ENCODE measurements at regions of chr17 and their contacts with region 1.

Region 1: DNA sequence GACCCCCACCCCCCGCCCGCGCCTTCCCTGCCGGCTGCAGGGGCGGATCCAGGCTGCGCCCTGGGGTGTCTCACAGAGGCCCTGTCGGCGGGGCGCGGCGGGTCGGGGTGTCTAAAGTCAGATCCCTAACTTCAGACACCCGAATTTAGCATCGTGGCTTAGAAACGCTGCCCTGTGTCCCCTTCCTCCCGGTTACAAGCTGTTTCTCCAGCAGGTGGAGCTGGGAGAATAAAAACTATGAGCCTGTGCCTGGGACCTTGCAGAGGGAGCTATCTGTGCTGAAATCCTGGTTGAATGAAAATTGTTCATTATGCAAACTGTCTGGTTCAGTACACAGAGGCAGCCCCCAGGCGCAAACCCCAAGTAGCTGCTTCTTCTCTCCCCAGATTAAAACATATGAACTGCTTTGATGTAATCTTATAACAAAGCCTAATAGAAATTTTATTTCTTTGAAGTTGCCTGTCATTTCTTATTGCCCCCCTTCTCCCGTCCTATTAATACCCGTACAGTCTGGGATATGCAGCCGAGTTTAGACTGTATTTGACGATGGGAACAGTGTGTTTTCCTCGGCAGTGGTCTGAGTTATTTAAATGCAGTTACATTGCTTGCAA is 79.0 kb downstream of the RPA1 start:
- DNase-seq: peak; percentile 72 to 86 (median 79)
- H3K4me3 ChIP-seq: peak overlapping the region in 1 of 4 donors; percentile 25
- H3K27ac ChIP-seq: no peak overlapping the region
- H3K4me1 ChIP-seq: peaks cover 0 to 13% of the 10 kb centered on the region in 2 donors
- H3K27me3 ChIP-seq: peaks cover 16% of the 10 kb centered on the region
- CTCF ChIP-seq: peak; percentile 48 to 88 (median 83)
- POLR2A ChIP-seq: no peak

Region 2: DNA sequence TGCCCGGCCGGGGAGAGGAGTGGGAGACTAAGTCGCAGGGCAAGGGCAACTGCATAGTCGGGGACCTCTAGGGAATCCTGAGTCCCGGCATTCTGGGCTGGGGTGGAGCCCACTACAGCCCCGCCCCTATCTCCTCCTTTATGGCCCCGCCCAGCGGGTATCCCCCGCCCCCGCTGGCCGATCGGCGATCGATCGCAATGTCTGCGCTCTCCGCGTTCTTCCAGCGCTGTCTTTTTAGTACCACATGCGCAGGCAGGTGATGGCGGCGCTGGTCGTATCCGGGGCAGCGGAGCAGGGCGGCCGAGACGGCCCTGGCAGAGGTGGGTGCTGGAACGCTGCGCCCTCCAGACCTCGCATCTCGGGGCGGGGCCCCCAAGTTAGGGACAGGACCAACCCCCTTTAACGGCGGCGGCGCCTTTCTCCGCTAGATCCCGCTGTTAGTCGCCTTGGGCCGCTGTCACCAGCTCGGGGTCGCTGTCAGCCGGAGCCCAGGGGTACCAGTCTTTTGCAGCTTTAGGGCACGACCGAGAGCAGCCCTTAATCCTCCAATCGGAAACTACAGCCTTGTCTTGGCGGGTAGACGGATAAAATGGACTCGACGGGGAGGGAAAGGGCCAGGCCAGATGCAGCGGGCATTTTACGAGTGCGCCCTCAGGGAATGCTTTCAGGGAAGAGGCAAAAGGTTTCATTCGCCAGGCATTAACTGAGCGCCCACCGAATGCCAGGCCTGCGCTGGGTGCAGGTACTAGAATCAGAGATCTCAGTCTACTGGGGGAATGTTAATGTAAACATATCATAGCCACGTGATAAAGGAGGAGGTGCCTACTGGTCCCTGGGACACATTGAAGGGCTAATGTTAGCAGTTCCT is 121.3 kb after region 1 on chr17 and contains the start of gene DPH1:
- intact Hi-C with region 1: loop called (anchors 2 to 5 kb)
- DNase-seq: peak; percentile 90 to 94 (median 93)
- H3K4me3 ChIP-seq: peak within 1 kb of the TSS; percentile 67 to 99 (median 91)
- H3K27ac ChIP-seq: peak within 1 kb of the TSS in 4 of 5 donors; percentile 11 to 81 (median 69)
- H3K4me1 ChIP-seq: peaks cover 7 to 25% of the 10 kb centered on the region in 2 donors
- H3K27me3 ChIP-seq: no peaks in the 10 kb centered on the region
- CTCF ChIP-seq: peak in 1 of 6 experiments; percentile 49
- POLR2A ChIP-seq: peak; percentile 12 to 63
- total RNA-seq, gene DPH1: 29.3 to 65.3 (median 53.3) TPM

Region 3: GRCh38 chr17:2041561-2042366 is 133.0 kb after region 1 on chr17 and contains the start of gene OVCA2:
- intact Hi-C with region 1: loop called in 1 of 2 experiments (anchors 2 kb)
- DNase-seq: peak; percentile 94 to 98 (median 97)
- H3K4me3 ChIP-seq: peak within 1 kb of the TSS; percentile 12 to 98 (median 73)
- H3K27ac ChIP-seq: peak within 1 kb of the TSS; percentile 66 to 100 (median 91)
- H3K4me1 ChIP-seq: peaks cover 15 to 29% of the 10 kb centered on the region in 2 donors
- H3K27me3 ChIP-seq: no peaks in the 10 kb centered on the region
- CTCF ChIP-seq: peak; percentile 4 to 51 (median 43)
- POLR2A ChIP-seq: peak; percentile 55 to 81
- total RNA-seq, gene OVCA2: 37.2 to 75.9 (median 60.2) TPM

Region 4: DNA sequence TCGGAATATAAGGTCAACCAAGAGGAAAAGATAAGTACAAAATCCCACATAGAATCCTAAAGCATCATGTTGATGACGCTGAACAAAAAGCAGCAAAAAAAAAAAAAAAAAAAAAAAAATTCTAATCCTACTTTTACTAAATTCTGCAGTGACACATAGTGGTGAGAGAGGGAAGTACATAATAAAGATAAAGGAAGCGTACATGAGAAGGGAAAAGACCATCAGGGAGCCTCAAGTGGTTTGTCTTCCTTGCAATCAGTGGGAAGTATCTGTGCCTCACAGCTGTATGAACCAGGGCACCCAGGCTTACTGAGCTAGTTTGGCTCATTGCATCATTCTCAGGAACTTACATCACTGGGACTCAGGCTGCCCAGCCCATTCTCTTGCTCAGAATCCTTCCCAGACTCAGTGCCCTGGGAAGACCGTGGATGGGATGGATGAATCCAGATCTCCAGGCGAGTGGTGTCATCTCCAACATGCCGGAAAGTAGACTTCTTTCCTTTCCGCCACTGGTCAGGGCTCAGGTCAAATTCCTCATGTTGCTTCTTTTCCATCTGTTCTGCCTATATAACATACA is 373.6 kb after region 1 on chr17:
- intact Hi-C with region 1: loop called in 1 of 2 experiments (anchors 10 kb)
- DNase-seq: peak in 1 of 7 donors; percentile 30
- H3K4me3 ChIP-seq: no peak overlapping the region
- H3K27ac ChIP-seq: peak overlapping the region in 2 of 5 donors; percentile 4 to 33
- H3K4me1 ChIP-seq: no peaks in the 10 kb centered on the region
- H3K27me3 ChIP-seq: no peaks in the 10 kb centered on the region
- CTCF ChIP-seq: peak; percentile 53 to 86 (median 60)
- POLR2A ChIP-seq: no peak

Measured in adrenal gland (tissue), 19 donors.